Activated CD8-positive, alpha-beta memory T cell treated with anti-CD3 and anti-CD28 coated beads, Interleukin-2, amount 10 ng/mL, durations not matched to agents 7 days and 5 days (primary cell): ENCODE measurements at regions of chr1 and their contacts with region 1.

Region 1: GRCh38 chr1:119948342-119949214 is 52.3 kb upstream of the ADAM30 start:
- DNase-seq: peak; percentile 84
- ATAC-seq: peak; percentile 83
- H3K4me3 Mint-ChIP-seq: no peak overlapping the region
- H3K27ac Mint-ChIP-seq: no peak overlapping the region
- H3K4me1 Mint-ChIP-seq: peaks cover 9% of the 10 kb centered on the region
- H3K27me3 Mint-ChIP-seq: no peaks in the 10 kb centered on the region

Region 2: GRCh38 chr1:119962296-119962968 is 13.9 kb after region 1 on chr1:
- CTCF ChIA-PET with region 1: interaction called, 14 read pairs
- DNase-seq: no peak
- ATAC-seq: no peak
- H3K4me3 Mint-ChIP-seq: no peak overlapping the region
- H3K27ac Mint-ChIP-seq: no peak overlapping the region
- H3K4me1 Mint-ChIP-seq: peaks cover 6% of the 10 kb centered on the region
- H3K27me3 Mint-ChIP-seq: no peaks in the 10 kb centered on the region

Region 3: DNA sequence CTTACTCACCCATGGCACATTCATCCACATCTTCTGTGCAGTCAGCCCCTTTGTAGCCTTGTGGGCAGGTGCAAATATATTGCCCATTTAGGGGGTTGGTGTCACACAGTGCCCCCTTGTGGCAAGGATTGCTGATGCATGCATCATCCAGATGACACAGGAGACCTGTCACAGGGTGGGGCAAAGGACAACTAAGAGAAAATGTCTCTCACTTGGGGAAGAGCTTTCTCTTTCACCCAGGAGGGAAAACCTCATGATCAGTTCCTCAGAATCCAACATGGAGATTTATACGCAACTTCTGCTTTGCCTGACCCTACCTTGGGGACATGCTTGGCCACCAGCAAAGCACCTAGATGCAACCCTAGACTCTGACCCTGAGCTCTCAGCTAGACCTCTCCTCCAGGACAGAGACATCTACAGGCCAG is 19.5 kb after region 1 on chr1:
- CTCF ChIA-PET with region 1: interaction called, 14 read pairs
- DNase-seq: peak; percentile 88
- ATAC-seq: peak; percentile 99
- H3K4me3 Mint-ChIP-seq: no peak overlapping the region
- H3K27ac Mint-ChIP-seq: peak overlapping the region; percentile 19
- H3K4me1 Mint-ChIP-seq: peaks cover 11% of the 10 kb centered on the region
- H3K27me3 Mint-ChIP-seq: no peaks in the 10 kb centered on the region

Region 4: GRCh38 chr1:120133228-120133925 is 184.8 kb after region 1 on chr1:
- CTCF ChIA-PET with region 1: no interaction called
- DNase-seq: no peak
- ATAC-seq: no peak
- H3K4me3 Mint-ChIP-seq: no peak overlapping the region
- H3K27ac Mint-ChIP-seq: no peak overlapping the region
- H3K4me1 Mint-ChIP-seq: peaks cover 16% of the 10 kb centered on the region
- H3K27me3 Mint-ChIP-seq: peaks cover 2% of the 10 kb centered on the region